A549 (cell line): ENCODE measurements at regions of chr19 and their contacts with region 1.

Region 1: DNA sequence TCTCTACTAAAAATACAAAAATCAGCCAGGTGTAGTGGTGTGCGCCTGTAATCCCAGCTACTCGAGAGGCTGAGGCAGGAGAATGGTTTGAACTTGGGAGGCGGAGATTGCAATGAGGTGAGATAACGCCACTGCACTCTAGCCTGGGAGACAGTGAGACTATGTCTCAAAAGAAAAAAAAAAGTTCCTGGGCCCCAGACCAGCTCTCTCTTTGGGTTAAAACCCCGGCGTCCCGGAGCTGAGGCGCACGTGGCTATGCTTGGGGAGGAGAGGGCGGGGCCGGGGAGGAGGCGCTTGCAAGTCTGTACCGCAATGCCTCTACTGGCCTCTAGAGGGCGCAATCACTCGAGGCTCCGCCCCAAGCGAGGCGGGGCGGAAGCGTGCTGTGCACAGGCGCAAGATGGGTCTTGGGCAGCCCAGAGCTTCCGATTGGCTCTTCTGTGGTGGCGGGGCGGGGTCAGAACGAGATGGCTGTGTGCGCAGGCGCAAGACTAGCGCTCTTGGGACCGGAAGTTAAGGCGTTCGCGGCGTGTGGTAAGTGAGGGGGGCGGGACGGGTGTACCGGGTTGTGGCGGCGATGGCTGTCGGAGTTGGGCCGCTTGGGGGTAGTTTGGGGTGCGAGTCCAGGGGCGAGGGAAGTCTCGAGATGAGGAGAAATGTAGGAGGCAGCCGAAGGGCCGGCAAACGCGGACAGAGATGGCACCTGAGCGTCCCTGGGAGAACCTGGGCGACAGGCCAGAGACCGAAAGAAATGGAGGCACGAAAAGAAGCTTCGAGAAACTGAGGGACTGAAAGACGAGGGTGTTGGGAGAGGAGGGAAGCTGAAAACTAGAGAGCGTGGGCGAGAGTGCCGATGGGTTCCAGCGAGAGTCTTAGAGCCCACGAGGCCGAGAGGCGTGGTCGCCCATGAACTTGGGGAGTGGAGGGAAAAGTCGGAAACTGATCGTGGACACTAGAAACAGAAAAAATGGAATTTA is at the start of gene DHX34:
- DNase-seq: peak; percentile 100
- ATAC-seq: peak; percentile 97 to 98
- H3K4me3 ChIP-seq: peak within 1 kb of the TSS; percentile 74
- H3K27ac ChIP-seq: peak within 1 kb of the TSS; percentile 88 to 92
- H3K4me1 ChIP-seq: peaks cover 22% of the 10 kb centered on the region
- CTCF ChIP-seq: peak; percentile 97
- EP300 ChIP-seq: no peak
- POLR2A ChIP-seq: peak; percentile 91
- RAD21 ChIP-seq: peak in 1 of 2 experiments; percentile 45; a peak in 2 of 5 replicates
- polyA plus RNA-seq, gene DHX34: 12.4 and 14.4 TPM in 2 replicates

Region 2: GRCh38 chr19:47172666-47173455 is 176.2 kb before region 1 on chr19:
- CTCF ChIA-PET with region 1: no interaction called
- POLR2A ChIA-PET with region 1: no interaction called
- DNase-seq: no peak
- ATAC-seq: no peak
- H3K4me3 ChIP-seq: no peak overlapping the region
- H3K27ac ChIP-seq: no peak overlapping the region
- H3K4me1 ChIP-seq: peaks cover 11% of the 10 kb centered on the region; the same call in 2 of the 3 replicates
- CTCF ChIP-seq: no peak
- EP300 ChIP-seq: no peak
- POLR2A ChIP-seq: no peak
- RAD21 ChIP-seq: no peak

Region 3: GRCh38 chr19:47225746-47226425 is 123.2 kb before region 1 on chr19:
- CTCF ChIA-PET with region 1: interaction called, 3 read pairs
- POLR2A ChIA-PET with region 1: interaction called, 12 read pairs
- DNase-seq: peak; percentile 89 to 91
- ATAC-seq: peak; percentile 35 to 70
- H3K4me3 ChIP-seq: peak overlapping the region; percentile 89
- H3K27ac ChIP-seq: peak overlapping the region; percentile 97 to 98
- H3K4me1 ChIP-seq: peaks cover 36% of the 10 kb centered on the region
- CTCF ChIP-seq: peak; percentile 28; the same call in 1 of the 3 replicates
- EP300 ChIP-seq: peak in 1 of 2 experiments; percentile 51; a peak in 1 of 5 replicates
- POLR2A ChIP-seq: peak; percentile 100
- RAD21 ChIP-seq: peak in 1 of 2 experiments; percentile 30; a peak in 1 of 5 replicates

Region 4: DNA sequence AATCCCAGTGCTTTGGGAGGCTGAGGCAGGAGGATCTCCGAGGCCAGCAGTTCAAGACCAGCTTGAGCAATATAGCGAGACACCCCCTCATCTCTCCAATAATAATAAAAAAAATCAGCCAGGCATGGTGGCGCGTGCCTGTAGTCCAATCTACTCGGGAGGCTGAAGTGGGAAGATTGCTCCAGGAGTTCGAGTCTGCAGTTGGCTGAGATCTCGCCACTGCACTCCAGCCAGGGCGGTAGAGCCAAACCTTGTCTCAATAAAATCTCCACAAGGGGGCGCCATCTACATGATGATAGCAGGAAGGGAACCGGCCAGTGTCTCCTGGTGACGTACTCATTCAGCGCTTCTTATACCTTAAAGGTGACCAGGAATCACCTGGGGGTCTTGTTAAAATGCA is 53.1 kb before region 1 on chr19:
- CTCF ChIA-PET with region 1: interaction called, 117 read pairs
- POLR2A ChIA-PET with region 1: interaction called, 3 read pairs
- DNase-seq: peak; percentile 88
- ATAC-seq: peak; percentile 95 to 99
- H3K4me3 ChIP-seq: no peak overlapping the region
- H3K27ac ChIP-seq: peak overlapping the region; percentile 44 to 59; a peak in 4 of 6 replicates
- H3K4me1 ChIP-seq: peaks cover 5% of the 10 kb centered on the region; the same call in 1 of the 3 replicates
- CTCF ChIP-seq: peak; percentile 98
- EP300 ChIP-seq: no peak
- POLR2A ChIP-seq: no peak
- RAD21 ChIP-seq: peak; percentile 97 to 99

Region 5: GRCh38 chr19:47315125-47315821 is 33.8 kb before region 1 on chr19:
- CTCF ChIA-PET with region 1: interaction called, 73 read pairs
- POLR2A ChIA-PET with region 1: interaction called, 21 read pairs
- DNase-seq: peak; percentile 98 to 99
- ATAC-seq: peak; percentile 94 to 96
- H3K4me3 ChIP-seq: no peak overlapping the region
- H3K27ac ChIP-seq: peak overlapping the region; percentile 74 to 85
- H3K4me1 ChIP-seq: peaks cover 31% of the 10 kb centered on the region
- CTCF ChIP-seq: no peak
- EP300 ChIP-seq: peak; percentile 91 to 96; a peak in 3 of 5 replicates
- POLR2A ChIP-seq: no peak
- RAD21 ChIP-seq: peak; percentile 4 to 53

Region 6: GRCh38 chr19:47330466-47330869 is 18.6 kb before region 1 on chr19:
- CTCF ChIA-PET with region 1: interaction called, 72 read pairs
- POLR2A ChIA-PET with region 1: interaction called, 8 read pairs
- DNase-seq: no peak
- ATAC-seq: no peak
- H3K4me3 ChIP-seq: no peak overlapping the region
- H3K27ac ChIP-seq: peak overlapping the region; percentile 45 to 49; a peak in 4 of 6 replicates
- H3K4me1 ChIP-seq: peaks cover 24% of the 10 kb centered on the region
- CTCF ChIP-seq: no peak
- EP300 ChIP-seq: no peak
- POLR2A ChIP-seq: no peak
- RAD21 ChIP-seq: no peak

Region 7: DNA sequence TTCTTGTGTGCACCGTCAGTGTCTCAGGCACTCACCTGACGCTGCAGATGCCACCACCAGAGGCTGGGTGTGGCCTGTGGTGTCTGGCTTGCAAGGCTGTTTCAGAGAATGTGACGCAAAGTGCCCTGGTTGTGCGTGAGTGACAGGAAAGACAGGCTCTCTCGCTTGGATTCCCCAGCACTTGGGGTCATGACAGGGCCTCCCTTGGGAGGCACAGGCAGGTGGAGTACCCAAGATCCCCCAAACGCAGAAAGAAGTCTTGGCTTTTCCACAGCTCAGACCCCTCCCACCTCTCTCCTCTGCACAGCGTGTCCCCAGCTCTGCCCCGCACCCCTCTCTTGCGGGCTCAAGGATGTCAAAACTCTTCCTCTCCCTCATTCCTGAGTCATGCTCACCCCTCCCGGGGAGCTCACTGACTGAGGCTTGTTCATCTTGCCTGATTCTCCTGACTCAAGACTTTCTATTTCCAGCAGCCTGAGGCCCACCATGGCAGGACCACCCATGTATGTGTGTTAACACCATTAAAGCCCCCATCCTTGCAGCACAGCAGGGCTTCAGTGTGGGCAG is 21.0 kb after region 1 on chr19:
- CTCF ChIA-PET with region 1: interaction called, 103 read pairs
- POLR2A ChIA-PET with region 1: interaction called, 6 read pairs
- DNase-seq: no peak
- ATAC-seq: peak; percentile 12 to 35; a peak in 1 of 6 replicates
- H3K4me3 ChIP-seq: no peak overlapping the region
- H3K27ac ChIP-seq: 0 out of 6 replicates have a peak overlapping the region, but pooled peaks of 1 of the 2 experiments have one; percentile 14
- H3K4me1 ChIP-seq: peaks cover 7% of the 10 kb centered on the region; the same call in 1 of the 3 replicates
- CTCF ChIP-seq: no peak
- EP300 ChIP-seq: no peak
- POLR2A ChIP-seq: no peak
- RAD21 ChIP-seq: no peak

Region 8: GRCh38 chr19:47398707-47399597 is 49.8 kb after region 1 on chr19:
- CTCF ChIA-PET with region 1: interaction called, 22 read pairs
- POLR2A ChIA-PET with region 1: interaction called, 5 read pairs
- DNase-seq: no peak
- ATAC-seq: peak in 1 of 2 experiments; percentile 42; a peak in 2 of 6 replicates
- H3K4me3 ChIP-seq: no peak overlapping the region
- H3K27ac ChIP-seq: no peak overlapping the region
- H3K4me1 ChIP-seq: no peaks in the 10 kb centered on the region
- CTCF ChIP-seq: no peak
- EP300 ChIP-seq: no peak
- POLR2A ChIP-seq: no peak
- RAD21 ChIP-seq: no peak